MCF 10A (cell line): ENCODE measurements at regions of chr12 and their contacts with region 1.

Region 1: DNA sequence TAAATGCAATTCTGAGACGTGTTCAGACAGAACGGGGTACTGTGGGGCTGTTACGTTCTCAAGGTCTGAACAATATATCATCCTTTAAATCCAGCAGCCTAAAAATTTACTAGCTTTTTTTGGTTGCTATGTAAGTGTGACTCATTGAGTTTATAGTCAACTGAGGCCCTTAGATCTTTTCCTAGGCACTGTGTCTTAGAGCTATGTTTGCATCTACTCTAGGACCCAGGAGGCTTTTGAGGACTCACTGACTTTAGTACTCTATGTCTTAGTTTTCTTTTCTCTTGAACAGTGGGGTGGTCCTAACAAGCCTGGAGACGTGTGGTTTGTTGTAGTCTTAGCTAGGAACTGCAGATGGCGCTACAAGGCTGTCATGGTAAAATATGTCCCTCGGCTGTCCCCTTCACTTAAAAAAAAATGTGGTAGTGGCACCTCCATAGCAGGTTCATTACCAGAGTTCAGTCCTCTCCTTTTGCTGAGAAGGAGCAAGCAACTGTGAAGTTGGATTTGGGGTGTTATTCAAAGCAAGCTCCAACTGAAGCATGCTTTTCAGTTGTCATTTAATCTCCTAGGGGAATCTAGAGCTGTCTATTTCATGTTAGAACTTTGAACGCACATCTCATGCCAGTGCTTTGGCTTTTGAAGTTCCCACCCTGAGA is 8.7 kb upstream of the SPATS2 start:
- DNase-seq: peak; percentile 72
- H3K4me3 Mint-ChIP-seq: no peak overlapping the region
- H3K27ac Mint-ChIP-seq: peak overlapping the region; percentile 57
- H3K4me1 Mint-ChIP-seq: peaks cover 25% of the 10 kb centered on the region
- H3K27me3 Mint-ChIP-seq: no peaks in the 10 kb centered on the region
- CTCF ChIP-seq: peak; percentile 93

Region 2: DNA sequence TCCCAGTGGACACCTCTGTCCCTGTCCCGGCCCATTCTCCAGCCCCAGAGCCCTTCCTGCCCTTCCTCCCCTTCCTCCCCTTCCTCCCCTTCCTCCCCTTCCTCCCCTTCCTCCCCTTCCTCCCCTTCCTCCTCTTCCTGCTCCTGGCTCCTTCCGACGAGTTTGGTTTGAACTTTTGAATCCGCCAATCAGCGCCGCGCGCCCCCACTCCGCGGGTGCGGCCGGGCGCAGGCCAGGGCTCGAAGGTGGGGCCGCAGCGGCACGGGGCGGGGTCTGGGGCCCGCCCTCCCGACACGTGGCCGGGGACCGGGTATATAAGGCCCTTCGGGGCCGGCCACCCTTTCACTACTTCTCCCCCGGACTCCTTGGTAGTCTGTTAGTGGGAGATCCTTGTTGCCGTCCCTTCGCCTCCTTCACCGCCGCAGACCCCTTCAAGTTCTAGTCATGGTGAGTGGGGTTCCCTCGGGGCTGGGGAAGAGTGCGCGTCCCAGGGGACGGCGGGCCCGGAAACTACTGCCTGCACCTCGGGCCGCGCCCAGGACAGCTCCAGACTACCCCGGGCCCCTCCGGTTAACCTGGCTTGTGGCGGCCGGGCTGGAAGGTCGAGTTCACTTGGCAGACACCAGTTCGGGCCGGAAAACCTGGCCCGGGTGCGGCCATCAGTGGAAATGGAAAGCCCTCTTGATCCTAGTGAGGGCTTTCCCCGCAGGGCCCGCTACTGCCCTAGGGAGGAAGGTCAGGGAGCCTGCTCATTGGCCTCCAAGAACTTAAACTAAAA is 93.7 kb before region 1 on chr12 and contains the start of gene TUBA1C:
- CTCF ChIA-PET with region 1: interaction called, 11 read pairs
- POLR2A ChIA-PET with region 1: no interaction called
- intact Hi-C with region 1: no loop called
- DNase-seq: peak; percentile 96
- H3K4me3 Mint-ChIP-seq: peak within 1 kb of the TSS; percentile 85
- H3K27ac Mint-ChIP-seq: peak within 1 kb of the TSS; percentile 97
- H3K4me1 Mint-ChIP-seq: peaks cover 31% of the 10 kb centered on the region
- H3K27me3 Mint-ChIP-seq: no peaks in the 10 kb centered on the region
- CTCF ChIP-seq: no peak
- total RNA-seq, gene TUBA1C: 253 and 303 TPM in 2 replicates

Region 3: GRCh38 chr12:49342066-49342913 is 16.3 kb before region 1 on chr12:
- CTCF ChIA-PET with region 1: interaction called, 61 read pairs
- POLR2A ChIA-PET with region 1: interaction called, 3 read pairs
- intact Hi-C with region 1: no loop called
- DNase-seq: peak; percentile 76
- H3K4me3 Mint-ChIP-seq: no peak overlapping the region
- H3K27ac Mint-ChIP-seq: no peak overlapping the region
- H3K4me1 Mint-ChIP-seq: peaks cover 19% of the 10 kb centered on the region
- H3K27me3 Mint-ChIP-seq: peaks cover 38% of the 10 kb centered on the region
- CTCF ChIP-seq: peak; percentile 75

Region 4: GRCh38 chr12:49503674-49504180 is 145.1 kb after region 1 on chr12:
- CTCF ChIA-PET with region 1: interaction called, 288 read pairs
- POLR2A ChIA-PET with region 1: interaction called, 6 read pairs
- intact Hi-C with region 1: no loop called
- DNase-seq: peak; percentile 69
- H3K4me3 Mint-ChIP-seq: peak overlapping the region; percentile 40
- H3K27ac Mint-ChIP-seq: peak overlapping the region; percentile 54
- H3K4me1 Mint-ChIP-seq: peaks cover 15% of the 10 kb centered on the region
- H3K27me3 Mint-ChIP-seq: no peaks in the 10 kb centered on the region
- CTCF ChIP-seq: no peak

Region 5: GRCh38 chr12:49538510-49539403 is 180.1 kb after region 1 on chr12 and contains the start of gene KCNH3:
- CTCF ChIA-PET with region 1: interaction called, 10 read pairs
- POLR2A ChIA-PET with region 1: no interaction called
- intact Hi-C with region 1: no loop called
- DNase-seq: peak; percentile 71
- H3K4me3 Mint-ChIP-seq: peak within 1 kb of the TSS; percentile 62
- H3K27ac Mint-ChIP-seq: no peak within 1 kb of the TSS
- H3K4me1 Mint-ChIP-seq: peaks cover 15% of the 10 kb centered on the region
- H3K27me3 Mint-ChIP-seq: peaks cover 10% of the 10 kb centered on the region
- CTCF ChIP-seq: no peak
- total RNA-seq, gene KCNH3: not detected in 2 replicates

Region 6: DNA sequence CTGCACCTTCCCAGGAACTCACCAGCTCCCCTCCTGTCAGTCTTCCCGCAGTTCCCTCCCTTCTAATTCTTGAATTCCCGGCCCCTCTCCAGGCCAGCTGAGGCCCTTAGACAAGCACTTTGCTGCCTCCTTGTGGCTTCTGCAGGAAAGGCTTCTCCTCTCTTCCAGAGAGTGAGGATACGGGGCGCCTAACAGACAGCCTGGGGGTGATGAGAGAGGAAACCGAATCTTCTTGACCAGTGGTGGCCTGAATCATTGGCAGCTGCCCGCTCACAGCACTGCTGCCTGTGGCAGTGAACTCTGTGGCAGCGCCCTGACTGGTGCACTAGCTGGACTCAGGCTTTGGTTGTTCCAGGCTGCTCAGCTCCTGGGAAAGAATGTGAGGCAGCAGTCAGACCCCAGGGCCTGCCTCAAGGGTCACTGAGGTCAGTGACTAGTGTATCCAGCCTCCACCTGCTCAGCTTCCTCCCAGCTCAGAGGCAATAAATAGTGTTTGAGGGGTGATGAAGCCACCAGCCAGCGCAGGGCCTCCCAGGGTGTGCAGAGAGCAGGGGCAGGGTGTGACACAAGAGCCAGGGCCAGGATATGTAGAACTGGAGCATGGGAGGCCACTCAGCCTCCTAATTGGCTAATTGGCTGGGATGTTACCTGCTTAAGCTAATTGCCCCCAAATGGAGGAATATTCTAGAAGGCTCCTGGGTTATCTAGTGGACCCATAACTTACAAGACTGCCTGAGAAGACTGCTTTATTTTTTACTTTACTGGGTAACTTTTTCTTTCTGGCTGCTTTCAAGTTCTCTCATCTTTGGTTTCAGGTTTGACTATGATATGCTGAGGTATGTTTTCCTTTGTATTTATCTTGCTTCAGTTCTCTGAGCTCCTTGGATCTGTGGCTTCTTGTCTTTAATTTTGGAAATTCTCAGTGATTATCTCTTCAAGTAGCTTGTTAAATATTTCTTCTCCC is 222.2 kb after region 1 on chr12:
- CTCF ChIA-PET with region 1: interaction called, 69 read pairs
- POLR2A ChIA-PET with region 1: interaction called, 6 read pairs
- intact Hi-C with region 1: loop called (anchors 1 kb)
- DNase-seq: peak; percentile 86
- H3K4me3 Mint-ChIP-seq: no peak overlapping the region
- H3K27ac Mint-ChIP-seq: no peak overlapping the region
- H3K4me1 Mint-ChIP-seq: peaks cover 6% of the 10 kb centered on the region
- H3K27me3 Mint-ChIP-seq: no peaks in the 10 kb centered on the region
- CTCF ChIP-seq: peak; percentile 75